SK-N-SH (cell line): ENCODE measurements at regions of chr15 and their contacts with region 1.

Region 1: DNA sequence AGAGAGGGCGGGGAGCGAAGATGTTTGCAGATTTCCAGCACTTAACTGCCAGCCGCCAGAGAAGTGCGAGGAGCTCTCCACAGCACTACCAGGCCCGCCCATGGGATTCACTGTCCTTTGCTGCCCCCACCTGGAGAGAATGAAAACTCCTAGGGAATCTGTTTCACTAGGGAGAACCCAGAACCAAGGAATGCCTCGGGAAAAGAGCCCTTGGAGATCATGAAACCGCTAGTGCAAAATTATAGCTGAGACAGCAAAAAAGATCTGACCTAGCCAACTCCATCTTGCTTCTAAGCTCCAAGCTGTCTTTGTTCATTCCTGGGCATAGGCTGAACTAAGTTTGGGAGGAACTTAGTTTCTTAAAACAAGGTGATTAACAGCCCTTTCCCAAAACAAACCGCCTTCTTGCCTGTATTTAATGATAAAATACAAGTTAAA is 82.6 kb upstream of the GCNT3 start:
- DNase-seq: peak; percentile 80
- H3K4me3 ChIP-seq: no peak overlapping the region
- H3K27ac ChIP-seq: no peak overlapping the region
- H3K4me1 ChIP-seq: no peaks in the 10 kb centered on the region
- H3K27me3 ChIP-seq: no peaks in the 10 kb centered on the region
- CTCF ChIP-seq: peak; percentile 86
- EP300 ChIP-seq: no peak
- RAD21 ChIP-seq: peak; percentile 96

Region 2: DNA sequence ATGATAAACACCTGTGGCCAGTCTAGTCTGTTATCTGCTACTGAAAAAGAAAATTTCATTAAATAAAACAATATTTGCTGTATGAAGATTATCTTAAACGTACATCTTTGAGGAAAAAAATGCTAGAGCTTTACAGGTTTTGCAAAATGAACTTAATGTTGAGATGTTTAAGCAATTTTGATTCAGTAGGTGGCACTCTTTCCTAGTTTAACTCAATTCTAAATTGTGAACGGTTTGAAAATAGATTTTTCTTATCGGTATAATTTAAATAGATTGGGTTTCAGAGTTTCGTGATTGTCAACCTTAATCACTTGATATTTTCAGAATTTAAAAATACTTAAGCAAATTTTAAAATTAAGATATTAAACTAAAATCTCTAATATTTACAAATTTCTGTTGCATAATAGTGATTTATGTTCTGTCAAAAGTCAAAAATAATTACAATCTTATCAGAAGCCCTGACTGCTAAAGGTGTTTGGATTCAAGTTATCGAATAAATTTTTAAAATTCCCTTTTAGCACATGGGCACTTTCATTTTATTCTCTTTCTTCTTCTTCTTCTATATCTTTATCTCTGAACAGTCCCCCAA is 548.5 kb before region 1 on chr15:
- CTCF ChIA-PET with region 1: interaction called, 18 read pairs
- POLR2A ChIA-PET with region 1: no interaction called
- DNase-seq: peak; percentile 34
- H3K4me3 ChIP-seq: no peak overlapping the region
- H3K27ac ChIP-seq: no peak overlapping the region
- H3K4me1 ChIP-seq: no peaks in the 10 kb centered on the region
- H3K27me3 ChIP-seq: no peaks in the 10 kb centered on the region
- CTCF ChIP-seq: peak; percentile 70
- EP300 ChIP-seq: no peak
- RAD21 ChIP-seq: peak; percentile 78

Region 3: DNA sequence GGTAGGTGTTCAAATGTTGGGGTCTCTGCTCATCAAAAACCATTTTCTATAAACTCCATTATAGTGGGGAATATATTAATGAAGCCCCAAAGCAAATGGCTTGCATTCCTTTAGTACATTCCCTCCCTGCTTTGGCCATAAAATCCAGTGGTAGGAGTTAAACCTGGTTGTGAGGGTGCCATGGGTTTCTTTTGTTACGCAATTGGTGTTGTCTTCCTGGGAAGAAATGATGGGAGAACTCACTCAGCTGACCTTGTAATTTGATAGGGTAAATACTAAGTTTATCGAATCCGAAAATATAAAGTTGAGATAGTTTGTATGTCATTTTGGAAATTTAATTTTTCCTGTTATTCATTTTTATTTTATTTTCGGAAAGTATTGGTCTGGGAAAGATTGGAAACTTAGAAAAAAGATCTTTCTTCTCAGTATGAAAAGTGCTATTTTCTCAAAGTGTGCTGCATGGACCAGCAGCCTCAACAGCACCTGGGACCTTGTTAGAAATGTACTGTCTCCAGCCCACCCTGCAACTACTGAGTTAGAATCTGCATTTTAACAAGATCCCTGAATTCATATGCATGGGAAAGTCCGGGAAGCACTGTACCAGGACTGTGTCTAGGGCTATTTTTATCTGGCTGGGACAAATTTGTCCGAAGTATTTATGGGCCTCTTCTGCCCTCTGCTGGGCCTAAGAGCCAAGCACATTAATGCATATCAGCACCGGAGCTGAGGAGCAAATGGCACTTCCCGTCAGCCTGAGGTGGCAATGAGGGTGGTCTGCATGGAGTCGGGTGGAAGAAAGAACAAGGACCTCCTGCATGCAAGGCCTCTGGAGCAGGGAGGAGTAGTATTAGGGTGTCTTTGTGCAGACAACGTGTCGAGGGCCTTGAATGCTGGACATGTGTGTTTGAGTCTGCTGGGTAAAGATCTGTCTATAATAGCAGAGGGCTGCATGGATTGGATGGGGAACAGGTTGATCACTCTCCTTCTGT is 36.3 kb before region 1 on chr15:
- CTCF ChIA-PET with region 1: interaction called, 33 read pairs
- POLR2A ChIA-PET with region 1: no interaction called
- DNase-seq: peak; percentile 70
- H3K4me3 ChIP-seq: no peak overlapping the region
- H3K27ac ChIP-seq: no peak overlapping the region
- H3K4me1 ChIP-seq: peaks cover 0 to 2% of the 10 kb centered on the region in 2 experiments; a peak in 1 of 4 replicates
- H3K27me3 ChIP-seq: no peaks in the 10 kb centered on the region
- CTCF ChIP-seq: peak; percentile 85
- EP300 ChIP-seq: no peak
- RAD21 ChIP-seq: peak; percentile 99

Region 4: GRCh38 chr15:59543721-59544547 is 14.9 kb after region 1 on chr15:
- CTCF ChIA-PET with region 1: interaction called, 15 read pairs
- POLR2A ChIA-PET with region 1: no interaction called
- DNase-seq: no peak
- H3K4me3 ChIP-seq: no peak overlapping the region
- H3K27ac ChIP-seq: no peak overlapping the region
- H3K4me1 ChIP-seq: no peaks in the 10 kb centered on the region; a peak in 1 of 4 replicates
- H3K27me3 ChIP-seq: no peaks in the 10 kb centered on the region; the same call in 1 of the 2 replicates
- CTCF ChIP-seq: no peak
- EP300 ChIP-seq: no peak
- RAD21 ChIP-seq: no peak

Region 5: DNA sequence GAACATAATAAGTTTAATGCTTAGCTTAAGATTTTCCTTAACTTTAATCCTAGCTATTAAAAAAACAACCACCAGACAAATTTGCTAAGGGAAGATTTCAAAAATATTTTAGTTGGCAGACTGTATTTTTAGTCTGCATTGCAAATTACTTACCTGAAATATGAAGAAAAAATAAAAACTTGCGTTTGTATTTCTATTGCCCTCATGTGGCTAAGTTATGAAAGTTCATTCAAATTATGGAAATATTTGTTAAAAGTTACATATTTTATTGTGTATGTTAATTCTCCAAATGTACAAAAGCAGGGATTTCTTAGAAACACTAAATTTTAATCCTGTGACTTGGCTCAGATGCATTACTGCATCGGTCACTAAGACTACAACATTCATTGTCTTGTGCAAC is 113.4 kb after region 1 on chr15:
- CTCF ChIA-PET with region 1: interaction called, 37 read pairs
- POLR2A ChIA-PET with region 1: no interaction called
- DNase-seq: no peak
- H3K4me3 ChIP-seq: no peak overlapping the region
- H3K27ac ChIP-seq: no peak overlapping the region
- H3K4me1 ChIP-seq: no peaks in the 10 kb centered on the region
- H3K27me3 ChIP-seq: no peaks in the 10 kb centered on the region
- CTCF ChIP-seq: peak; percentile 57
- EP300 ChIP-seq: no peak
- RAD21 ChIP-seq: no peak